WTC11 (cell line): ENCODE measurements at regions of chr10 and their contacts with region 1.

Region 1: GRCh38 chr10:122648599-122649428 is 50.8 kb downstream of the C10orf120 start:
- DNase-seq: peak; percentile 78
- ATAC-seq: peak; percentile 96
- H3K4me3 Mint-ChIP-seq: no peak overlapping the region
- H3K27ac Mint-ChIP-seq: no peak overlapping the region
- H3K4me1 Mint-ChIP-seq: no peaks in the 10 kb centered on the region
- H3K27me3 Mint-ChIP-seq: peaks cover 6% of the 10 kb centered on the region; the same call in 1 of the 2 replicates
- CTCF ChIP-seq: peak; percentile 85

Region 2: DNA sequence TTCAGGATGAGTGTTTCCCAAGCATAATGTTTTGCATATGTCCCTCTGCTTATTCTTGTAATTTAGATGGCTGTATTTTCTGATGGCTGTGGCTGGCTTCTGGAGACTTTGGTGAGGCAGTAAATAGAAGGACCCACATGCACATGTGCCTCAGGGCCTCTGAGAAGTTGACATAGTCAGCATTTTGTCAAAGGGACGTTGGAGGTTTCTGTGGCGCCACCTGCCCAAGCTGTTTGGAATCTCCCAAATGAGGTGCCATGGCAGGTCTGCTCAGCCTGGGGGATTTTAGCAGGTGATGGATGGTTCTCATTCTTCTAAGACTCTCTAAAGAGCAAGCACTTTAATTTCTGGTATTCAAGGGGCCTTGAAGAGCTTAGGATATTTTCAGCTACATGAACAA is 21.0 kb after region 1 on chr10:
- CTCF ChIA-PET with region 1: interaction called, 18 read pairs
- POLR2A ChIA-PET with region 1: no interaction called
- DNase-seq: peak; percentile 44
- ATAC-seq: peak; percentile 69
- H3K4me3 Mint-ChIP-seq: no peak overlapping the region
- H3K27ac Mint-ChIP-seq: no peak overlapping the region
- H3K4me1 Mint-ChIP-seq: peaks cover 15% of the 10 kb centered on the region
- H3K27me3 Mint-ChIP-seq: no peaks in the 10 kb centered on the region; the same call in 1 of the 2 replicates
- CTCF ChIP-seq: no peak

Region 3: GRCh38 chr10:122688293-122688994 is 39.6 kb after region 1 on chr10:
- CTCF ChIA-PET with region 1: interaction called, 23 read pairs
- POLR2A ChIA-PET with region 1: no interaction called
- DNase-seq: no peak
- ATAC-seq: peak; percentile 69
- H3K4me3 Mint-ChIP-seq: no peak overlapping the region
- H3K27ac Mint-ChIP-seq: 0 out of 2 replicates have a peak overlapping the region, but pooled peaks have one; percentile 10
- H3K4me1 Mint-ChIP-seq: peaks cover 8% of the 10 kb centered on the region
- H3K27me3 Mint-ChIP-seq: peaks cover 21% of the 10 kb centered on the region
- CTCF ChIP-seq: no peak

Region 4: DNA sequence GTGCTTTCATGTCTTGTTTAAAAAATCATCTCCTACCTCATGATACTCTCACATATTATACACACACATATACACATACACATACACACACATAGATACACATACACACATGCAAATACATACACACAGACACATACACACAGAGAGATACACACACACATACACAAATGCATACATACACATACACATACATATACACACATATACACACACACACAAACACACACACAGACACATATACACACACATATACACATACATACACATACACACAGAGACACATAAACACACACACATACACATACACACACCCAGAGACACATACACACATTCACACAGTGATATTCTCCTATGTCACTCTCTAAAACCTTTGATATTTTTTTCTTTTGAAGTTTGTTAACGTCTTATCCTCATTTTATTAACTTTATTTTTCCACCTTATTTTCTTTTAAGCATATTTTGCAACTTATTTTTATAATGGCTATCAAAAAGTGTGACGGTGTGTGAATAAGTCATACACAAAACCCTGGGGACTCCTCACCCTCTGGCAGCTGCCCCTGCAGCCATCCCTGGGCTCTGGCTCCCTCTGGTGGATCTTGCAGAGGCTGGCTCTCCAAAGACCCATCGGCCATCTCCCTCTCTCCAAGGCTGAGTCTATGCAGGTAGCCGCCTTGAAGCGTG is 54.8 kb after region 1 on chr10:
- CTCF ChIA-PET with region 1: interaction called, 19 read pairs
- POLR2A ChIA-PET with region 1: no interaction called
- DNase-seq: peak; percentile 87
- ATAC-seq: peak; percentile 96
- H3K4me3 Mint-ChIP-seq: no peak overlapping the region
- H3K27ac Mint-ChIP-seq: no peak overlapping the region
- H3K4me1 Mint-ChIP-seq: peaks cover 16% of the 10 kb centered on the region
- H3K27me3 Mint-ChIP-seq: no peaks in the 10 kb centered on the region; the same call in 1 of the 2 replicates
- CTCF ChIP-seq: peak; percentile 75

Region 5: DNA sequence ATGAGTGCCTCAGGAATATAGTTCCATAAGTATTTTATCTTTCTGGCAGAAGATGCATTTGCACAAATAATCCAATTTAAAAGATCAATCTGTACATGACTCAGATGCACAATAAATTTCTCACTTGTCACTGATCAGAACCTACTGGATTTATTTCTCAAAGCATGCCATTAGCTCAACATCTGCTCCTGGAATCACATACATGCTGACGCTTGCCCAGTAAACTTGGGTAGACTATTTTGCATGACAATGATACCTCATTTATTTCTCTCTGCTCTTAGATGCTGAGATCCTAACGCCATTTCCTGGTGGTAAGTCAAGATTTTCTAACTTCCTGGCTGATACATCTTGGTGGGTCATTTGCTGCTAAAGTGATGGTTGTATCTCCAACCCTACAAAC is 84.6 kb after region 1 on chr10:
- CTCF ChIA-PET with region 1: no interaction called
- POLR2A ChIA-PET with region 1: no interaction called
- DNase-seq: no peak
- ATAC-seq: no peak
- H3K4me3 Mint-ChIP-seq: no peak overlapping the region
- H3K27ac Mint-ChIP-seq: no peak overlapping the region
- H3K4me1 Mint-ChIP-seq: peaks cover 28% of the 10 kb centered on the region
- H3K27me3 Mint-ChIP-seq: no peaks in the 10 kb centered on the region
- CTCF ChIP-seq: no peak